PC-9 (cell line): ENCODE measurements at regions of chr14 and their contacts with region 1.

Region 1: DNA sequence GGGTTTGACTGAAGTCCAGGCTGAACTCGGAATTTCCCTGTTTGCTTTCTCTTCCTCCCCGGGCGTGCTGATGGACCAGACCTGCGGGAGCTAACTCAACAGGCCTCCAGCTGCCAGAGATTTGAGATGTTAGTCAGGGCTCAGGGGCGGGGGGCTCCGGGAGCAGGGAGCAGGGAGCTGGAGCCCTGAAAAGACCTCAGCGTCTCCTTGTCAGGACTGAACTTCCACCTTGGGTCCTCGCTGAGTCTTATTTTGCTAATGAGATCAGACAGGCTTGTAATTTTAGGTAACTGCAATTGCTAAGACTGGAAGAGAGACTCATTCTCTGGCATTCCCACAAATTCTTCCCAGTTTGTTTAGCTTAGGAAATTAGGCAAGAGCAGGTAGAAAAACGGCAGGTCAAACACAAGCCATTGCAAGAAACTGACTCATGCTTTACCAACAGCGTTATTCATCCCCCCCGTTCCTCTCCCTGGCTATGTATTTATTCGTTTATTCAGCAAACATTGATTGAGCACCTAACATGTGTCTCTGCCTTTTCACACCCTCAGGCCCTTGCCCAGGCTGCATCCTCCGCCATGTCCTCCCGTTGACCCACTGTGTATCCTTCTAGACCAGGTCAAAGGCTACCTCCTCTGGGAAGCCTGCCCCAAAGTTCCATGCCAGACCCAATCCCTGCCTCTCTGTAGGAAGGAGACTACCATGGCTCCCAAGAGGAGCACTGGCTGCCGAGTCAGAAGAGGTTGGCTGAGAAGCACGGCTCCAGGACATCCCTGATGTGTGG is 80.4 kb upstream of the DIO3 start:
- DNase-seq: peak; percentile 45 to 98
- H3K4me3 ChIP-seq: peak overlapping the region; percentile 44; the same call in 1 of the 2 replicates
- H3K27ac ChIP-seq: peak overlapping the region; percentile 89
- H3K4me1 ChIP-seq: peaks cover 58% of the 10 kb centered on the region
- H3K27me3 ChIP-seq: no peaks in the 10 kb centered on the region
- CTCF ChIP-seq: no peak

Region 2: GRCh38 chr14:101446387-101446969 is 34.5 kb before region 1 on chr14:
- CTCF ChIA-PET with region 1: no interaction called
- POLR2A ChIA-PET with region 1: no interaction called
- intact Hi-C with region 1: no loop called
- DNase-seq: no peak
- H3K4me3 ChIP-seq: no peak overlapping the region
- H3K27ac ChIP-seq: no peak overlapping the region
- H3K4me1 ChIP-seq: peaks cover 16% of the 10 kb centered on the region
- H3K27me3 ChIP-seq: no peaks in the 10 kb centered on the region
- CTCF ChIP-seq: no peak

Region 3: GRCh38 chr14:101458526-101459391 is 22.2 kb before region 1 on chr14:
- CTCF ChIA-PET with region 1: no interaction called
- POLR2A ChIA-PET with region 1: interaction called, 10 read pairs
- intact Hi-C with region 1: no loop called
- DNase-seq: no peak
- H3K4me3 ChIP-seq: no peak overlapping the region
- H3K27ac ChIP-seq: no peak overlapping the region
- H3K4me1 ChIP-seq: peaks cover 20% of the 10 kb centered on the region
- H3K27me3 ChIP-seq: no peaks in the 10 kb centered on the region
- CTCF ChIP-seq: no peak

Region 4: GRCh38 chr14:101552786-101553231 is 71.9 kb after region 1 on chr14:
- CTCF ChIA-PET with region 1: no interaction called
- POLR2A ChIA-PET with region 1: interaction called, 13 read pairs
- intact Hi-C with region 1: loop called (anchors 1 kb)
- DNase-seq: peak; percentile 88 to 97
- H3K4me3 ChIP-seq: no peak overlapping the region
- H3K27ac ChIP-seq: peak overlapping the region; percentile 25
- H3K4me1 ChIP-seq: peaks cover 33% of the 10 kb centered on the region
- H3K27me3 ChIP-seq: no peaks in the 10 kb centered on the region
- CTCF ChIP-seq: no peak

Region 5: DNA sequence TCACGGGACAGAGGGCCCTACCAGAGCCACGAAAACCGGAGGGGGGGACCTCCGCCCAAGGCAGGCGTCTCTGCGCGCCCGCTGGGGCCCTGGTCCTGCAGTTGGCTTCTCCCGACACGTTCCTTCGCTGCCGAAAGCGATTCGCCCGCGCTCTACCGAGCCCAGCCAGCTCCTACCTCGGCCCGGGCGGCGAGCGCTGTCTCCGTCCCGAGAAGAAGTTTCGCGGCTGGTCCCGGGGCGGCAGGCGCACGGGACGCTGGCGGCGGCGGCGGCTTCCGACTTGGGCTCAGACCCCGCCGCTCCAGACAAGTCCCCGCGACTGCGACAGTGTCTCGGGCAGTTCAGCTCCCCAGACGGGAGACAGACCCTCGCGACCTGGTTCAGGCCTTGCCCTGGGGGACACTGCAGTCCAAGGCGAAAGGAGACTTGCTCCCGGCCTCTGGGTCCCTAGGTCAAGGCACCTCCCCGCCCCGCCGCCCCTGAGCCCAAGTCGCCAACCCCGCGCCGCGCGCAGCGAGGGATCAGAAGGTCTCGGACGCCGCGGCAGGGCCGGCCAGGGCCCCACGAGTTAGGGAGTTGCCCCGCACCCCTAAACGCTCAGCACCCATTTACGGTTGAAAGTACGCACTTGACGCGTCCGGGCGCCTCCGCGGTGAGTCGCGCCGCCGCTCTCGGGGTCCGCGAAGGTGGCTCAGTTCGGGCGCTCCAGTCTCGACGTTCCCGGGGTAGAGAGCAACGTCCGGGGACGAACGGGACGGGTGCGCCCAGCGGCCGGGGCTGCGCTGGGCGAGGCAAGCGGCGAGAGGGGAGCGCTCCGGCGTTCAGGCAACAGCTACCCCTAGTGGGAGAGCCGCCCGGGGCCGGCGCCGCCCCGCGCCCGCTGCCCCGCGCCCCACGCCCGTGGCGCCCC is 78.9 kb after region 1 on chr14:
- CTCF ChIA-PET with region 1: no interaction called
- POLR2A ChIA-PET with region 1: interaction called, 13 read pairs
- intact Hi-C with region 1: no loop called
- DNase-seq: no peak
- H3K4me3 ChIP-seq: no peak overlapping the region
- H3K27ac ChIP-seq: no peak overlapping the region
- H3K4me1 ChIP-seq: no peaks in the 10 kb centered on the region
- H3K27me3 ChIP-seq: peaks cover 20% of the 10 kb centered on the region
- CTCF ChIP-seq: no peak